PC-3 (cell line): ENCODE measurements at regions of chr22 and their contacts with region 1.

Region 1: GRCh38 chr22:40238425-40239344 is 61.0 kb downstream of the TNRC6B start:
- DNase-seq: peak; percentile 85
- ATAC-seq: peak; percentile 88
- H3K4me3 ChIP-seq: peak overlapping the region; percentile 35; the same call in 1 of the 2 replicates
- H3K27ac ChIP-seq: peak overlapping the region; percentile 94
- H3K4me1 ChIP-seq: peaks cover 44% of the 10 kb centered on the region
- H3K27me3 ChIP-seq: no peaks in the 10 kb centered on the region
- CTCF ChIP-seq: no peak

Region 2: DNA sequence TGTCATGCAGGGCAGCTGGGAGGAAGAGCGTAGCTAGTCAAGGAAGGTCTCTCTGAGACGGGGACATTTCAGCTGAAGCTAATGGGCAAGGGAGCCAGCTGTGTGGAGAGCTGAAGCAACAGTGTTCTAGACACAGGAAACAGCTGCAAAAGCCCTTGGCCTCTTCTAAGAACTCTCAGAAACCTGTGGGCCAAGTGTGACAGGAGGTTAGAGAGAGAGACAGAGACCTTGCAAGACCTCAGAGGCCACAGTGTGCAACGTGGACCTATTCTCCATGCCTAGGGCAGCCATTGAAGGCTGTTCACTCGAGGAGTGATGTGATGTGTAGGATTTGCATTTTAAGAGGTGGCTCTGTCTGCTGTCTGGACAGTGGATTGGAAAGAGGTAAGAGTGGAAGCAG is 109.7 kb before region 1 on chr22:
- CTCF ChIA-PET with region 1: no interaction called
- POLR2A ChIA-PET with region 1: no interaction called
- intact Hi-C with region 1: no loop called
- DNase-seq: no peak
- ATAC-seq: no peak
- H3K4me3 ChIP-seq: no peak overlapping the region
- H3K27ac ChIP-seq: no peak overlapping the region
- H3K4me1 ChIP-seq: no peaks in the 10 kb centered on the region
- H3K27me3 ChIP-seq: no peaks in the 10 kb centered on the region
- CTCF ChIP-seq: no peak

Region 3: GRCh38 chr22:40258451-40259046 is 19.9 kb after region 1 on chr22:
- CTCF ChIA-PET with region 1: no interaction called
- POLR2A ChIA-PET with region 1: no interaction called
- intact Hi-C with region 1: loop called (anchors 2 kb)
- DNase-seq: peak; percentile 87
- ATAC-seq: peak; percentile 97
- H3K4me3 ChIP-seq: no peak overlapping the region
- H3K27ac ChIP-seq: peak overlapping the region; percentile 84
- H3K4me1 ChIP-seq: peaks cover 19% of the 10 kb centered on the region
- H3K27me3 ChIP-seq: no peaks in the 10 kb centered on the region
- CTCF ChIP-seq: no peak

Region 4: DNA sequence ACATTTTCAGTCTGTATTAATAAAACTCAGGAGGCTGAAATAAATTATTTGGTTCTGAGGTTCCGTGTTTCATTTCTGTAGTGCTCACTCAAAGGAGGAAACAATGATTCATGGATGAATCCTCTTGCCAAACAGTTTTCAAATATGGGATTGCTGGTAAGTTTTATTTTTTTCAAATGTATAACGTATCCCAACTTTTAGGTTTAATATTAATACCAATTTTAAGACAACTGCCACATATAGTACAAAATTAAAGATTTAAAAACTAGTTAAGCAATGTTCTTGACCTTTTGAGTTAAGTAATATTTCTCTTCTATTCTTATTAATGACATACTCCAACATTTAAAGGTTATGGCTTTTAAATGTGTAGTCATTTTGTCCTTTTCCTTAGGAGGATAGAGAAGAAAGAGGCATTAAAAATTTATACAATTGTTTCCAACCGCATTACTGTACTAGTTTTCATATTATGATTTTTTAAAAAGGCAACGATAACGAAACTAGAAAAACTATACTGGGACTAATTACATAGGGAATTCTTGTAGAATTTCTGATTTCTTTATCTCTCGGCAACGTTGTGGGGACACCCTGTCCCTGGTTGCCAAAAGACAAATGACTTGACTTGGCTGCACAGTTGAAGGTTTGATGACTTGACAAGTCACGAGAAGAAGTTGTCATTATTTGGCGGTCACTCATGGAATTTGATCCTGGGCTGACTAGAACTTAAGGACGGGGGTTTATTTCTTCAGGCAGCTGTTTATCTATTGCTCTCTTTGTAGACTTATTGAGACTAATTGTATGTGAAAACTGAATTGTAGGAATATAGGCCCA is 38.5 kb after region 1 on chr22:
- CTCF ChIA-PET with region 1: no interaction called
- POLR2A ChIA-PET with region 1: no interaction called
- intact Hi-C with region 1: loop called (anchors 5 kb)
- DNase-seq: peak; percentile 37
- ATAC-seq: peak; percentile 59
- H3K4me3 ChIP-seq: peak overlapping the region; percentile 69
- H3K27ac ChIP-seq: peak overlapping the region; percentile 96
- H3K4me1 ChIP-seq: peaks cover 38% of the 10 kb centered on the region
- H3K27me3 ChIP-seq: no peaks in the 10 kb centered on the region
- CTCF ChIP-seq: no peak